ENCODE measurements at regions of chr17 and their contacts with region 1.

Region 1: DNA sequence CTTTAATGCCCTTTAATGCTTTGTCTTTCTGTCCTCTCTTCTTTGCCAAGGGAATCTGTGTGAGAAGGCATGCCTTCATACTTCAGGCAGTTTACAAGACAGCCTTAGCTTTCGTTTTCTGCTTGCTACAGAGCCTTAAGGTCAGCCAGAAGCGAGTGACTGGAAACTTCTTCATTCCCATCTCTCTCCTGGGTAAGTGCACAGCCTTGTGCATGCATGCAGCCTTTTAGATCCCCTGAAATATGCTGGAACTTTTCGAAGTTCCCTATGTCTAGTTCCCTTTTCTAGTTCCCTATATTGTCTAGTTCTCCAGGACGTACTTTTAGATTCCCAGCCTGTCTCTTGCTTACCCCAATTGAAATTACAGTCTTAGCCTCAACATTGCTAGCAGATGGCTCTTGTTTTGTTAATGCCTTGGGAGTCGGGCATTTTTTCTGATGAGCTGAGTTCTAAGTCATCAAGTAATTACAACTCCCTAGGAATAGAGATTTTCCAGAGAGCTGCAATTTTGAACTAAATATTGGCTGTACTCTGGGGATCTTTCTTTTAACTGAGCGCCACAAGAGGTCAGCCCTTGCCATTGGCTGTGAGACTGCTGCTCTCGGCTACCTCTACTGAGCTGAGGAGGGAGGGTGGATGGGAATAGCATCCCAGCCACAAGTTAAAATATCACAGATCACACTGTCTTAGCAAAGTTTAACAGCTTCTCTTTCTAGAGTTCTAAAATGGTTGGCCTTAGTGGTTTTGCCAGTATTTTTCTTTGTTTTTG is 22.7 kb upstream of the PPM1D start:
- DNase-seq: no peak
- ATAC-seq: peak; percentile 86

Region 2: GRCh38 chr17:60345227-60345626 is 232.1 kb before region 1 on chr17:
- intact Hi-C with region 1: no loop called
- DNase-seq: no peak
- ATAC-seq: no peak

Region 3: GRCh38 chr17:60630352-60630751 is 53.0 kb after region 1 on chr17:
- intact Hi-C with region 1: loop called (anchors 10 kb)
- DNase-seq: peak; percentile 48
- ATAC-seq: no peak

Region 4: DNA sequence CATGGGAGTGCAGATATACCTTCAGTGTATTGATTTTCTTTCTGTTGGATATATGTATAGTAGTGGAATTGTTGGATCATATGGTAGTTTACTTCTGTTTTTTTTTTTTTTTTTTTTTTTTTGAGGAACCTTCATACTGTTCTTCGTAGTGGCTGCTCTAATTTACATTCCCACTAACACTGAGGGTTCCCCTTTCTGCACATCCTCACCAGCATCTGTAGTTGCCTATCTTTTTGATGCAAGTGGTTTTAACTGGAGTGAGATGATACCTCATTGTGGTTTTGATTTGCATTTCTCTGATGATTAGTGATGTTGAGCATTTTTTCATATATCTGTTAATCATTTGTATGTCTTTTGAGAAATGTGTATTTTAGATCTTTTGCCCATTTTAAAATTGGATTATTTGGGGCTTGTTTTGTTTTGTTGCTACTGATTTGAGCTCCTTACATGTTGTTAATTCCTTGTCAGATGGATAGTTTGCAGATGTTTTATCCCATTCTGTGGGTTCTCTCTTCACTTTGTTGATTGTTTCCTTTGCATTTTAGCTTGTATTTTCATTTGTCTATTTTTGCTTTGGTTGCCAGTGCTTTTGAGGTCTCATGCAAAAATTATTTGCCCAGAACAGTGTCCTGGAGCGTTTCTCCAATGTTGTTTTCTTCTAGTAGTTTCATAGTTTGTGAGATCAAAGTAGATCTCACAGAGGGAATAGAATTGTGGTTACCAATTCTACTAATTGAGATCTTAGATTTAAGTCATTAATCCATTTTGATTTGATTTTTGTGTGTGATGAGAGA is 75.3 kb after region 1 on chr17:
- intact Hi-C with region 1: no loop called
- DNase-seq: no peak
- ATAC-seq: no peak